HEK293 (cell line): ENCODE measurements at regions of chr4 and their contacts with region 1.

Region 1: DNA sequence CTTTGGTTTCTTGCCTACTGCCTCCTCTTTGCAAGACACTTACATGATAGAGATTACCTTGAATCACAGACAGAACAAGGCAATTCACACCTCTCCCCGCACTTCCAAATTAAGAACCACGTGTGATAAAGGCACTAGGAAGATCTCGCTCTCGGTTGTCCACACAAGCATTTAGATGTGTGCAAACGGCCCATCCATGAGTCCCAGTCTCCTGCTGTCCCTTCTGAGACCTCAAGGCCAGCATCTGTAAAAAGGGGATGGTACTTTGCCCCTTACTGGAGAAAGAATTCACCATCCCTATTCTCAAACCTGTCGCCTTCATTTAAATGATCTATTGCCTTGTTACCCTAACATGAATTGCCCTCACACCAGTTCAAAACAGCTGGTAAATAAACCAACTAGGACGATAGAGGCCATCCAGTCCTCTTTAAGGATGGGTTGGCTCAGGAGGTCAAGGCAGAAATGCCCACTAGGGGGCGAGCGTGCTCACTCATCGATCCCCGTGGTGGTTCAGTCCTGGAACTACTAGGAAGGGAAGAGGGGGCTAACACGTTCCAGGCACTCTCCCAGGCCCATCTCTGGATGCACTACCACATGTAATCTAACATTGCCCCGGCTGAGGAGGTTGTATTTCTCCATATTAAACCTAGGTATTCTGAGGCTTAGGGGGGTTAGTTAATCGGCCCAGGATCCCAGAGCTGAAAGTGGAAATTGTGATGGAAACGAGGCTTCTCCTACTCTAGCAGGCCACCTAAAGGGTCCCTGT is 95.8 kb downstream of the DHX15 start:
- H3K4me3 ChIP-seq: no peak overlapping the region
- H3K27ac ChIP-seq: no peak overlapping the region
- H3K4me1 ChIP-seq: no peaks in the 10 kb centered on the region
- CTCF ChIP-seq: no peak

Region 2: GRCh38 chr4:24476282-24476681 is 12.3 kb before region 1 on chr4:
- CTCF ChIA-PET with region 1: interaction called, 17 read pairs
- POLR2A ChIA-PET with region 1: no interaction called
- H3K4me3 ChIP-seq: no peak overlapping the region
- H3K27ac ChIP-seq: no peak overlapping the region
- H3K4me1 ChIP-seq: no peaks in the 10 kb centered on the region; the same call in 1 of the 2 replicates
- CTCF ChIP-seq: no peak

Region 3: DNA sequence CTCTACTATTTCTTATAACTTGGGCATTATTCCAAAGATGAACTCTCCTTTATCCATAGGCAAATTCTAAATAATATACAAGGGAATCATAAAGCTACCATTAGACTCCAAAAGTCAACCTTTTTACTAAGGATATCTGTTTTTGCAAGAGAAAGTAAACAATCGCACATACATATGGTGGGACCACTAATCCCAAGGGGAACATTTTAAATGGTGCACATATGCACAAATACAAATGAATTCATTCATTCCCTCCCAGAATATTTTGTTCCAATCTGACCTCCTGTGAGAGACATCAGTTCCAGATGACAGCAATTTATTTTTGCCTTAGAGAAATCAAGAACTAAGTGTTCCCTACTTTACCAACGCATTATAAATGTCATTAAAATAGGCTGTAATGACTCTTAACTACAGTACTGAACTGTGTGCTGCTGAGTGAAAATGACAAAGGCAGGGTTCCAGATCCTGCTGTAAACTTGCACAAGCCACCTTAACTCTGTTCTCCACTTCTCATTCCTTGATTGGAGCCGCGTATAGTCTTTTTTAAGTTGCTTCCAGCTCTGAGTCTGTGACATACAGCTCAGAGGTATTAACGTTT is 93.8 kb after region 1 on chr4:
- CTCF ChIA-PET with region 1: no interaction called
- POLR2A ChIA-PET with region 1: no interaction called
- H3K4me3 ChIP-seq: peak overlapping the region; percentile 97
- H3K27ac ChIP-seq: no peak overlapping the region
- H3K4me1 ChIP-seq: no peaks in the 10 kb centered on the region
- CTCF ChIP-seq: no peak